Activated CD8-positive, alpha-beta T cell treated with anti-CD3 and anti-CD28 coated beads, Interleukin-2, amount 10 ng/mL, durations not matched to agents 7 days and 5 days (primary cell): ENCODE measurements at regions of chr18 and their contacts with region 1.

Region 1: GRCh38 chr18:3771121-3771971 is 321.4 kb downstream of the TGIF1 start:
- DNase-seq: peak; percentile 85
- ATAC-seq: peak; percentile 100
- H3K4me3 Mint-ChIP-seq: peak overlapping the region; percentile 28
- H3K27ac Mint-ChIP-seq: no peak overlapping the region
- H3K4me1 Mint-ChIP-seq: peaks cover 11% of the 10 kb centered on the region
- H3K27me3 Mint-ChIP-seq: peaks cover 25% of the 10 kb centered on the region

Region 2: DNA sequence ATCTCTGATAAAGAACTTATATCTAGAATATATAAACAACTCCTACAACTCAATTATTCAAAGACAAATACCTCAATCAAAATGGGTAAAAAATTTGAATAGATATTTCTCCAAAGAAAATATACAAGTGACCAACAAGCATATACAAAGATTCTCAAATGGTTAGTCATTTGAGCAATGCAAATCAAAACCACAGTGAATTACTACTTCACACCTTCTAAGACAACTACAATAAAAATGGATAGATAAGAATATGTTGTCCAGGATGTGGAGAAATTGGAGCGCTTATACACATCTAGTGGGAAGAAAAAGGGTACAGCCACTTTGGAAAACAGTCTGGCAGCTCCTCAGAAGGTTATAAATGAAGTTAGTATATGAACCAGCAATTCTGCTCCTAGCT is 11.6 kb after region 1 on chr18:
- CTCF ChIA-PET with region 1: interaction called, 15 read pairs
- POLR2A ChIA-PET with region 1: no interaction called
- DNase-seq: no peak
- ATAC-seq: no peak
- H3K4me3 Mint-ChIP-seq: no peak overlapping the region
- H3K27ac Mint-ChIP-seq: no peak overlapping the region
- H3K4me1 Mint-ChIP-seq: no peaks in the 10 kb centered on the region
- H3K27me3 Mint-ChIP-seq: no peaks in the 10 kb centered on the region

Region 3: DNA sequence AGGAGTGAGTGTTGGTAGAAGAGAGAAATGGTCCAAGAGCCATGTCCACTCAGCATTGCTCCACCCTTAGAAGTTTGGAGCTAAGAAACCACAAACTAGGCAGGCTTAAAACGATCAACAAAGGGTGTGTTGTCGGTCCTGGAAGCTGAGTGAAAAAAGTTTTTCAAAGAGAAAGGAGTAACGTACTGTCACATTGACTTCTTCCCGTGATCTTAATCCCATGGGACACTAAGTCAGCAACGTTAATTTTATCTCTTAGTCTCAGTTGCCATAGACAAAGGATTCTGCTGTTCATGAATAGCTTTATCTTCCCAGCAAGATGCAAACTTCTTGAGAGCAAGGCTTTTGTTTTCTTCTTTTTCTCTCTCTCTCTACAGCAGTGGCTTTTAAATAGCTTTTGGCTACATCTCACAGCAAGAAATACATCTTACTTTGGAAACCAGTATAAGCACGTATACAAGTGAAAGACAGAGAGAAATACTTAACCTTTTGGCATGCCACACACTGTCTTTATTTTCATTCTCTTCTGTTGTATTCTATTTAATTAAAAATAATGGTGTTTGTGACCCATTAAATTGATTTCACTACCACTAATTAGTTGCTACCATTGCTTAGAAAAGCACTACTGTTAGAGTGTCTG is 56.0 kb after region 1 on chr18:
- CTCF ChIA-PET with region 1: no interaction called
- POLR2A ChIA-PET with region 1: no interaction called
- DNase-seq: no peak
- ATAC-seq: no peak
- H3K4me3 Mint-ChIP-seq: no peak overlapping the region
- H3K27ac Mint-ChIP-seq: no peak overlapping the region
- H3K4me1 Mint-ChIP-seq: no peaks in the 10 kb centered on the region
- H3K27me3 Mint-ChIP-seq: no peaks in the 10 kb centered on the region

Region 4: GRCh38 chr18:3985664-3986063 is 214.3 kb after region 1 on chr18:
- CTCF ChIA-PET with region 1: interaction called, 19 read pairs
- POLR2A ChIA-PET with region 1: no interaction called
- DNase-seq: no peak
- ATAC-seq: no peak
- H3K4me3 Mint-ChIP-seq: no peak overlapping the region
- H3K27ac Mint-ChIP-seq: no peak overlapping the region
- H3K4me1 Mint-ChIP-seq: peaks cover 9% of the 10 kb centered on the region
- H3K27me3 Mint-ChIP-seq: no peaks in the 10 kb centered on the region

Region 5: DNA sequence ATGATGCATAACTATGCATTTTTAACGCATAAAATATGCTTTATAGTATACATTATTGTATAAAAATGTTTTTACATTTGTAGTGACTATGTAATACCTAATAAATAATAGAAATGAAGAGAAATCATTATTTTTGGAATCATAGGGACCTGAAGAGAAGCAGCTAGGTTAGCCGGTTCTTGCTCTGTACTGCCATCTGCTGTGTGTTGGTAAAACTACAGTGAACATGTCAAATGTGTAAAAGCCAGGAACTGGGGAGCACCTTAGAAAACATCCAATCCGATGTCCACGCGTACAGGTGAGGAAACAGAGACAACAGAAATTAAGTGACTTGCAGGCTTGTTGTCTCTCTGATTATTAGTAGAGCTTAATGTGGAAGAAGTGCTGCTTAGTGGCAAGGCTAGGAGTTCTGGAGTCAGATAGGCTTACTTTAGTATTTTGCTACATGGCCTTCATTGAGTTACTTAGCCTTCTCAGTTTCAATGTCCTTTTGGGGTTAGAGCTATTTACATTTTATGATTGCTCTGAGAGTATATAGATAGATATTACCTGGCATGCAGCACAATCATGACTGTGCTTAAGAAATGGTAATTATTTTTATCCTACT is 297.3 kb after region 1 on chr18:
- CTCF ChIA-PET with region 1: interaction called, 13 read pairs
- POLR2A ChIA-PET with region 1: no interaction called
- DNase-seq: peak; percentile 50
- ATAC-seq: peak; percentile 55
- H3K4me3 Mint-ChIP-seq: no peak overlapping the region
- H3K27ac Mint-ChIP-seq: no peak overlapping the region
- H3K4me1 Mint-ChIP-seq: no peaks in the 10 kb centered on the region
- H3K27me3 Mint-ChIP-seq: no peaks in the 10 kb centered on the region